ENCODE measurements at regions of chr15 and their contacts with region 1.

Region 1: DNA sequence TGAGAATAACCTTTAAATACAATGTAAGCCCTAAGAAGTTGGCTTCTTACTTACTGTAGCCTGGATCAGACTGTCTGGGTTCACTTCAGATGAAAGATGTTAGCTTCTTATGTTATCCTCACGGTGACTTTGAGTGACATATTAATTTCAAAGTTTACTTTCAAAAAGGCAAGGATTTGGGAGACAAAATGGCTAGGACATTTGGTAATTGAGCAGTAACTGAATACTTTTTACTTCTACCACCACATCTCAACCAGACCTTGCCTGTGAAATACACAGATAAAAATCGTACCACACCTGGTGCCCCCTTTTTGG is 36.0 kb upstream of the BNIP2 start:
- DNase-seq: no peak
- H3K4me3 Mint-ChIP-seq: no peak overlapping the region
- H3K27ac Mint-ChIP-seq: no peak overlapping the region
- H3K4me1 Mint-ChIP-seq: no peaks in the 10 kb centered on the region
- H3K27me3 Mint-ChIP-seq: no peaks in the 10 kb centered on the region

Region 2: GRCh38 chr15:59583088-59583487 is 142.0 kb before region 1 on chr15:
- CTCF ChIA-PET with region 1: no interaction called
- intact Hi-C with region 1: no loop called
- DNase-seq: no peak
- H3K4me3 Mint-ChIP-seq: no peak overlapping the region
- H3K27ac Mint-ChIP-seq: no peak overlapping the region
- H3K4me1 Mint-ChIP-seq: peaks cover 8% of the 10 kb centered on the region
- H3K27me3 Mint-ChIP-seq: no peaks in the 10 kb centered on the region

Region 3: GRCh38 chr15:59699810-59700431 is 25.2 kb before region 1 on chr15:
- CTCF ChIA-PET with region 1: no interaction called
- intact Hi-C with region 1: no loop called
- DNase-seq: no peak
- H3K4me3 Mint-ChIP-seq: no peak overlapping the region
- H3K27ac Mint-ChIP-seq: no peak overlapping the region
- H3K4me1 Mint-ChIP-seq: no peaks in the 10 kb centered on the region
- H3K27me3 Mint-ChIP-seq: peaks cover 1% of the 10 kb centered on the region

Region 4: DNA sequence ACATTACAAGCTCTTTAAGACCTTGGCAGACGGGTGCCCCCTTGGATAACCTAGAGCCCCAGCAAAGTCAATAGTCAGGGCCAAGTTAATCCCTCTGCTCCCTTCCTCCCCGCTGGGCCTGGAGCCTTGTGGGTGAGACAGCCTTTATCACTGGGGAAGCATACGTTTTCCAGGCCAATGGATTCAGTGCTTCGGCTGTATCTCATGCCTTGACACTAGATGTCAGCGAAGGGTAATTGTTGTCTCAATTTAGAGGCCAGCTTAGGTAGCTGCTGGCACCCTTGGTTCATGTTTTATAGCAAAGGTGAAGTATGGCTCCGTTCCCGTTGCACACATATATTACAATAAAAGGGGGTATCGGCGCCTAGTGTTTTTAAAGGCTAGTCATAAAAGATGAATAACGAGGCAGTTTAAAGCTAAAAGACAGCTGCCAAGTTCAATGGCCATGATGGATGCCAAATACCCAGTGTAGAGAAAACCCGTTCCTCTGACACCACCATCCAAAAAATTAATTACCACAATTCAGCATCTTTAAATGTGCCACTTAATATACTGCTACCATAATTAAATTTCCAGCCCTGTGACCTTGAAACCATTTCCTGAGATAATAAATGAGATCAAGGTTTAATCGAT is 16.3 kb after region 1 on chr15:
- CTCF ChIA-PET with region 1: interaction called, 12 read pairs
- intact Hi-C with region 1: no loop called
- DNase-seq: peak; percentile 10
- H3K4me3 Mint-ChIP-seq: no peak overlapping the region
- H3K27ac Mint-ChIP-seq: no peak overlapping the region
- H3K4me1 Mint-ChIP-seq: no peaks in the 10 kb centered on the region
- H3K27me3 Mint-ChIP-seq: peaks cover 7% of the 10 kb centered on the region

Region 5: DNA sequence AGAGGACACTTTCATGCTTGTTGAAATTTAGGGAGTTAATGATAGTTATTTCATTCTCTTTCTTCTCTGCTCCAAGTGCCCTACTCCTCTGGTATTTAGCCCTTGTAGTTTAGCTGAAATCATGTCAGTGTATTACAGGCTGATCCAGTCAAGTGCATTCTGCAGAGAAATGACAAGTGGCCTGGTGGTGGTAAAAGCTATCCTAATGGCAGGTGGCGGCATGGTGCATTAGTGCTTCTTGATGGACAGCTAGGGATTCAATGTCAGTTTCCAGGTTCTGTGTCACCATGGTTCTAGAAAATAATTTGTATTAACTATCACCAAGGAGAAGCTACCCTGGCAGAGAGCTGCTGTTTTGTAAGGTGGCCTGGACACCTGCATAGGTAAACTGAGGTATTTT is 54.0 kb after region 1 on chr15:
- CTCF ChIA-PET with region 1: no interaction called
- intact Hi-C with region 1: no loop called
- DNase-seq: no peak
- H3K4me3 Mint-ChIP-seq: no peak overlapping the region
- H3K27ac Mint-ChIP-seq: no peak overlapping the region
- H3K4me1 Mint-ChIP-seq: peaks cover 15% of the 10 kb centered on the region
- H3K27me3 Mint-ChIP-seq: no peaks in the 10 kb centered on the region

Region 6: DNA sequence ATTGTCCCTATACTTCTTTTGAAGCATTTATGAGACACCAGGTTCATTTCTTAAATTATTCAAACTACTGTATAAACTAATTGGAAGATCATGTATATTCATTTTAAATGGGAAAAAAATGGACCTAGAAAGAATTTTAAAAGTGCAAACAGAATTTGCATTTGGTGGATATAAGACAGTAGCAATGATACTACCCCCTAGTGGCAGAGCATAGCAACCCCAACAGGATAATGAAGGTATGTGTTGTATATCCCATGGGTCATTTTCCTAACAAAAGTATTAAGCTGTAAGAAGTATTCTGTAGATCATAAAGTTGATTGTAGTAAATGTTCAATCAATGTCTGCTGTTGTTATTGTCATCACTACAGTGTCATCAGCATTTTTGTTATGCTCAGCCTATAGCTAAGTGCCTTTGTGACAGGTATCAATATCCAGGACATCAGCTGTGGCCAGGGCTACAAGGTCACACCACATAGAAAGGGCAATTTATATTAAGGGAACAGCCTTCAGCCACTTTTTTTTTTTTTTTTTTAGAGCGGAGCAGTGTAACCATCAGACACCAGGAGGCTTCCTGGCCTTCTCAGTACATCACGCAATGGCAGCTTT is 454.8 kb after region 1 on chr15:
- CTCF ChIA-PET with region 1: interaction called, 3 read pairs
- intact Hi-C with region 1: loop called (anchors 1 kb)
- DNase-seq: peak; percentile 49
- H3K4me3 Mint-ChIP-seq: no peak overlapping the region
- H3K27ac Mint-ChIP-seq: no peak overlapping the region
- H3K4me1 Mint-ChIP-seq: no peaks in the 10 kb centered on the region
- H3K27me3 Mint-ChIP-seq: peaks cover under 1% of the 10 kb centered on the region

Region 7: GRCh38 chr15:60326824-60327654 is 601.9 kb after region 1 on chr15:
- CTCF ChIA-PET with region 1: interaction called, 22 read pairs
- intact Hi-C with region 1: loop called (anchors 1 kb)
- DNase-seq: peak; percentile 54
- H3K4me3 Mint-ChIP-seq: no peak overlapping the region
- H3K27ac Mint-ChIP-seq: no peak overlapping the region
- H3K4me1 Mint-ChIP-seq: peaks cover 2% of the 10 kb centered on the region
- H3K27me3 Mint-ChIP-seq: peaks cover 20% of the 10 kb centered on the region

Measured in activated naive CD4-positive, alpha-beta T cell treated with anti-CD3 and anti-CD28 coated beads for 36 hours (primary cell).